ENCODE measurements at regions of chr11 and their contacts with region 1.

Region 1: DNA sequence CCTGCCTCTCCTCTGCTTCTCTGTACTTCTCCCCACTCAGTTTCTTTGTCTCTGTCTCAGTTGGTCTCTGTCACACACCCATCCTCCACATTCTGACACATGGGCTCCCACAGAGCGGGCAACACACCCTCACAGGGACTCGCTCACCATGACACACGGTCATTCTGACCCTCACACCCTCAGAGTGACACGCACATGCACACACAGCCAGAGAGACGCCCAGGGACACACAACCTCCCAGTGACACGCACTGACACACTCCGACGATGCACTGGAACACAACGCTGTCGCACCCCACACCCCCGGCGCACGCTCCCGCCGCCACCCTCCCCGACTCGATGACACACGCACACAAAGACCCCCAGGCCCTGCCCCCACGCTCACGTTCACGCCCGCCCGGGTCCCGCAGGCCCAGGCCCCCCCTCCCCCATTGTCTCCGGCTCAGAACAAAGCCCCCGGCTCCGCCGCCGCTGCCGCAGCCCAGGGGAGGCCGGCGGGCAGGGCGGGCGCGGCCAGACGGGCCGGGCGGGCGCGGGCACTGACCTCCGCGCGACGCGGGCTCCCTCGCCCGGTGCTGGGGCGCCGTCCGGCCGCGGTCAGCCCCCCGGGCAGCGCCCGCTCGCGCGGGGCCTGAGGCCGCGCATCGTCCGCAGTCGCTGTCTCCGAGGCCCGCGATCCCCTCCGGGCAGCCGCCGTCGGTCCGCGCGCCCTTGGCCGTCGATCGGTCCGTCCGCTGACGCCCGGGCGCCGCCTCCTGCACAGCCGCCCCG is 404 bp downstream of the DCHS1 start:
- DNase-seq: peak; percentile 33
- H3K4me3 ChIP-seq: peak overlapping the region in 2 of 3 experiments; percentile 44
- H3K27ac ChIP-seq: no peak overlapping the region
- H3K4me1 ChIP-seq: peaks cover 15% of the 10 kb centered on the region
- H3K27me3 ChIP-seq: no peaks in the 10 kb centered on the region
- CTCF ChIP-seq: no peak
- POLR2A ChIP-seq: peak; percentile 61

Region 2: GRCh38 chr11:6667733-6668374 is 12.6 kb after region 1 on chr11:
- CTCF ChIA-PET with region 1: interaction called, 11 read pairs
- POLR2A ChIA-PET with region 1: no interaction called
- dilution Hi-C with region 1: no loop called
- intact Hi-C with region 1: no loop called
- DNase-seq: peak; percentile 34
- H3K4me3 ChIP-seq: no peak overlapping the region
- H3K27ac ChIP-seq: no peak overlapping the region
- H3K4me1 ChIP-seq: no peaks in the 10 kb centered on the region
- H3K27me3 ChIP-seq: no peaks in the 10 kb centered on the region
- CTCF ChIP-seq: peak; percentile 39 to 53
- POLR2A ChIP-seq: no peak

Region 3: DNA sequence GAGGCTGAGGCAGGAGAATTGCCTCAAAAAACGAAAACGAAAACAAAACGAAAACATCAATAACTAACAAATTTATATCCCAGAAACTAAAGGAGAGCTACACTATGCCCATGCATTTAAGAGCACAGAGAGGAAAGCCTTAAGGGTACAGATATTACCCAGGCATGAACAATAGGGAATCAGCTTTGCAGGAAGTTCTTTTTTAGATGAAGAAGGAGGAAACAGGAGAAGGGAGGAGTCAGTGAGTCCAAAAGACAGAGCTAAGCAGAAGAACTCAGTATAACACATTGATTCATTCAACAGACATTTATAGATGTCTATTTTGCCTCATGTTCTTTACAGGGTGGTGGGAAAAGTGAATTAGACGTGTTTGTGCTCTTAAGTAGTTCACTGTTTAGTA is 19.7 kb after region 1 on chr11:
- CTCF ChIA-PET with region 1: interaction called, 4 read pairs
- POLR2A ChIA-PET with region 1: no interaction called
- dilution Hi-C with region 1: no loop called
- intact Hi-C with region 1: loop called (anchors 2 kb)
- DNase-seq: peak; percentile 47
- H3K4me3 ChIP-seq: no peak overlapping the region
- H3K27ac ChIP-seq: peak overlapping the region; percentile 24
- H3K4me1 ChIP-seq: peaks cover 14% of the 10 kb centered on the region
- H3K27me3 ChIP-seq: no peaks in the 10 kb centered on the region
- CTCF ChIP-seq: no peak
- POLR2A ChIP-seq: no peak

Region 4: GRCh38 chr11:6735306-6735705 is 80.1 kb after region 1 on chr11:
- CTCF ChIA-PET with region 1: no interaction called
- POLR2A ChIA-PET with region 1: no interaction called
- dilution Hi-C with region 1: no loop called
- intact Hi-C with region 1: no loop called
- DNase-seq: peak; percentile 56
- H3K4me3 ChIP-seq: no peak overlapping the region
- H3K27ac ChIP-seq: peak overlapping the region; percentile 3
- H3K4me1 ChIP-seq: peaks cover 12% of the 10 kb centered on the region
- H3K27me3 ChIP-seq: peaks cover 0 to 3% of the 10 kb centered on the region in 2 experiments
- CTCF ChIP-seq: no peak
- POLR2A ChIP-seq: no peak

Measured in endothelial cell of umbilical vein (primary cell).